Mammary epithelial cell (primary cell): ENCODE measurements at regions of chr15 and their contacts with region 1.

Region 1: GRCh38 chr15:64634576-64635498 is 140.6 kb downstream of the RBPMS2 start:
- DNase-seq: no peak
- H3K4me3 ChIP-seq: no peak overlapping the region
- H3K27ac ChIP-seq: peak overlapping the region; percentile 38
- H3K4me1 ChIP-seq: peaks cover 16% of the 10 kb centered on the region
- H3K27me3 ChIP-seq: no peaks in the 10 kb centered on the region
- CTCF ChIP-seq: no peak

Region 2: GRCh38 chr15:64521726-64522164 is 113.1 kb before region 1 on chr15:
- CTCF ChIA-PET with region 1: no interaction called
- dilution Hi-C with region 1: no loop called
- in situ Hi-C with region 1: no loop called
- intact Hi-C with region 1: loop called (anchors 10 kb)
- DNase-seq: peak; percentile 93
- H3K4me3 ChIP-seq: peak overlapping the region in 2 of 3 experiments; percentile 5 to 12
- H3K27ac ChIP-seq: peak overlapping the region; percentile 59
- H3K4me1 ChIP-seq: peaks cover 55% of the 10 kb centered on the region
- H3K27me3 ChIP-seq: no peaks in the 10 kb centered on the region
- CTCF ChIP-seq: no peak

Region 3: DNA sequence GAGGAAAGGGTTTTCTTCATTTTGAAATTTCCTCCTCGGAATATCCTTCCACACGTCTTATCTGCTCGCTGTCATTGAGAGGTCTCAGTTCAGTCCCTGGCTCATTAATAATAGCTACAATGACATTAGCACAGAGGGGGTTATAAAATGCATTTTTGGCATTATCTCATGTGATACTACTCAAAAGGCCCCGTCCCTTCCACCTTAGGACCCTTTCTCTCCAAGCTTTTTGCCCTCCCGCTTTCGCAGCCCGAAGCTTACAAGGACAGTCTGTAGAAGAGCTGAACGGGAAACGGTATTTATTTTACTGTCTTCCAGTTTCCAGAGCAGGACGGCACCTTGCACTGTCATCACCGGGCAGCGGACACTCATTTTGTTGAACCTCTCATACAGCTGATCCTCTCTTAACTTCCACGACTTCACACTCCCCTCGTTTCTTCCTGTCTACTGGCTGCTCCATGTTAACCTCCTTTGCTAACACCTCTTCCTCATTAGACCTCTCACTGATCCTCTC is 201.2 kb after region 1 on chr15:
- CTCF ChIA-PET with region 1: no interaction called
- dilution Hi-C with region 1: no loop called
- in situ Hi-C with region 1: no loop called
- intact Hi-C with region 1: no loop called
- DNase-seq: no peak
- H3K4me3 ChIP-seq: no peak overlapping the region
- H3K27ac ChIP-seq: no peak overlapping the region
- H3K4me1 ChIP-seq: peaks cover 5% of the 10 kb centered on the region
- H3K27me3 ChIP-seq: no peaks in the 10 kb centered on the region
- CTCF ChIP-seq: no peak